Left cardiac atrium (tissue), 4 donors: ENCODE measurements at regions of chr9 and their contacts with region 1.

Region 1: GRCh38 chr9:2494562-2494961 is 127.0 kb upstream of the VLDLR start:
- DNase-seq: no peak
- ATAC-seq: peak in 1 of 2 donors; percentile 71

Region 2: GRCh38 chr9:2570615-2571479 is 76.3 kb after region 1 on chr9:
- intact Hi-C with region 1: loop called in 1 of 2 experiments (anchors 5 kb)
- DNase-seq: peak; percentile 90
- ATAC-seq: peak; percentile 91 to 94

Region 3: DNA sequence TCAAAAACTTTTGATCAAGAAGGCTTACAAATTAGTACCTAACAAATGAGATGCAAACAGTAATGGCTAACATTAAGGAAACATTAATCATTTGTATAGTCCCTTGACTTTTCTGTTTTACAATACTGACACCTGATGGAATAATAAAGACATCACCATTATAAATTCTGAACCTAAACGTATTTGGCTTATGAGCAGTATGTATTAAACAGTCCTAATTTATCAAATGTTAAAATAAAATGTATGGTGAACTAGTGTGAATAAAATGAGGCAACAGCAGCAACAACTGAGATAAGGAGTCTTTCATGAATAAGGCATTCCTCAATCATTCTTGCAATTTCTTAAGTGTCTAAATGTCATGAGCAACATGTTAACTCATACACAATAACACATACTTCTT is 343.4 kb after region 1 on chr9:
- intact Hi-C with region 1: no loop called
- DNase-seq: no peak
- ATAC-seq: peak; percentile 57 to 62

Region 4: DNA sequence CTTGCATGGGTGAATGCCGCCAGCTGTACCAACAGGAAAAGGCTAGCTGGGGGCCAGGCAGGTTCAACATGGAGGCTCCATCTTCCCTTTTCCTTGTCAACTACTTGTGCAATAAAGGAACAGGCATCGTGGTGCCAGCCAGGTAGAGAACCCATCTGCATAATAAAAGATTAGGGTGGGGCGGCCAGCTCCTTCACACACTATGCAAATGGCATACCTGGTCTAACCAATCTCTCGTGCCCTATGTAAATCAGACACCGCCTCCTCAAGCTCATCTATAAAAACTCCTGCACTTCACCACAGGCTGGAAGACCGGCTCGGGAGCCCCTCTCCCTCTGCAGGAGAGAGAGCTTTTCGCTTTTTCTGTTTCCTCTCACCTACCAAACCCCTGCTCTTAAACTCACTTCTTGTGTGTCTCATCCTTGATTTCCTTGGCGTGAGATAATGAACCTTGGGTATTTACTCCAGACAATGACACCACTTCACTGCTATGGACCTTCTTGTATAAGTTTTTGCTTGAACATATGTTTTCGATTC is 593.7 kb after region 1 on chr9:
- intact Hi-C with region 1: no loop called
- DNase-seq: no peak
- ATAC-seq: no peak